GM12878 (cell line): ENCODE measurements at regions of chr6 and their contacts with region 1.

Region 1: DNA sequence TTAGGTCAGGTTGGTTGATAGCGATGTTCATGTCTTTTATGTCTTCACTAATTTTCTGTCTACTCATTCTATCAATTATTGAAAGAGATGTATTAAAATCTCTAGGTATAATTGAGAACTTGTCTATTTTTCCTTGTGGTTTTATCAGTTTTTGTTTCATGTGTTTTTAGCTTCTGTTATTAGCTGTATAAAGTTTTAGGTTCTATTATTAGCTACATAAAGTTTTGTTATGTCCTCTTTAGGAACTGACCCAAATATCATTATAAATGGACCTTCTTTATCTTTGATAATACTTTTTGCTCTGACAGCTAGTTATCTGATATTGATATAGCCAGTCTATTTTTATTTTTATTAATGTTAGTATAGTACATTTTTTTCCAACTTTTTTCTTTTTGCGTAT is 92.4 kb upstream of the TMEM170B start:
- DNase-seq: no peak
- ATAC-seq: peak; percentile 23
- H3K4me3 ChIP-seq: no peak overlapping the region
- H3K27ac ChIP-seq: peak overlapping the region; percentile 27
- H3K4me1 ChIP-seq: peaks cover 3% of the 10 kb centered on the region; the same call in 1 of the 2 replicates
- H3K27me3 ChIP-seq: no peaks in the 10 kb centered on the region
- CTCF ChIP-seq: no peak
- EP300 ChIP-seq: no peak
- POLR2A ChIP-seq: no peak
- RAD21 ChIP-seq: no peak

Region 2: DNA sequence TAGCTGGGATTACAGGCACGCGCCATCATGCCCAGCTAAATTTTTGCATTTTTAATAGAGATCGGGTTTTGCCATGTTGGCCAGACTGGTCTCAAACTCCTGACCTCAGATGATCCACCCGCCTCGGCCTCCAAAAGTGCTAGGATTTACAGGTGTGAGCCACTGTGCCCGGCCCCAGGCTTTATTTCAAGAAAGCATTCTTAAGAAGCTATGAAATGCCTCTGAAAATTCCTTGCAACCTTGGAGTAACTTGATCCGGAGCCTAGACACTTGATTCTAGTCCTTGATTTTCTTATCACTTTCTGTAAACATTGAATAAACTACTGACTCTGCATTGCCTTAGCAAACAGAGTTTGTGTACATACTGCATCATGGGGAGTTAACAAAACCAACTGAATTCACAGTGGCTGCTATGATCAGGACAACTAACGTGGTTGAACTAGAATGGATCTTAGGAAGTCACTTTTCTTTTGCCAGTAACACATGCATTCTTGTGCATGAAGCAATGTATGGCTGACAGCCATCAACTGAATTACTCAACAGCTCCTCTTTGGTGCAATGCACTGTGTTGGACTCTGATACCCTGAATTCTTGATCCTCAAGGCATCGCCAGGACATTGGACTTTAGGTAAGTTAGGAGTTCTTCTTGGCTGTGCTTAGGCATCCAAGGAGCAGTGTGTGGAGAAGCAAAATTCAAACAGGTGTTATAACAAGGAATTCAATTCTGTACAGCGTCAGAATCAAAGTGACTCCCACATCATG is 10.4 kb before region 1 on chr6:
- CTCF ChIA-PET with region 1: interaction called, 5 read pairs
- POLR2A ChIA-PET with region 1: interaction called, 4 read pairs
- RAD21 ChIA-PET with region 1: interaction called, 6 read pairs
- SMC1A ChIA-PET with region 1: interaction called, 34 read pairs
- in situ Hi-C with region 1: no loop called
- intact Hi-C with region 1: no loop called
- DNase-seq: no peak
- ATAC-seq: no peak
- H3K4me3 ChIP-seq: no peak overlapping the region
- H3K27ac ChIP-seq: no peak overlapping the region
- H3K4me1 ChIP-seq: peaks cover 13% of the 10 kb centered on the region
- H3K27me3 ChIP-seq: no peaks in the 10 kb centered on the region
- CTCF ChIP-seq: no peak
- EP300 ChIP-seq: no peak
- POLR2A ChIP-seq: no peak
- RAD21 ChIP-seq: no peak

Region 3: GRCh38 chr6:11484441-11484840 is 39.3 kb after region 1 on chr6:
- CTCF ChIA-PET with region 1: no interaction called
- POLR2A ChIA-PET with region 1: no interaction called
- RAD21 ChIA-PET with region 1: no interaction called
- SMC1A ChIA-PET with region 1: no interaction called
- in situ Hi-C with region 1: no loop called
- intact Hi-C with region 1: no loop called
- DNase-seq: no peak
- ATAC-seq: no peak
- H3K4me3 ChIP-seq: no peak overlapping the region
- H3K27ac ChIP-seq: no peak overlapping the region
- H3K4me1 ChIP-seq: no peaks in the 10 kb centered on the region
- H3K27me3 ChIP-seq: no peaks in the 10 kb centered on the region
- CTCF ChIP-seq: no peak
- EP300 ChIP-seq: no peak
- POLR2A ChIP-seq: no peak
- RAD21 ChIP-seq: no peak